ENCODE measurements at regions of chr20 and their contacts with region 1.

Region 1: DNA sequence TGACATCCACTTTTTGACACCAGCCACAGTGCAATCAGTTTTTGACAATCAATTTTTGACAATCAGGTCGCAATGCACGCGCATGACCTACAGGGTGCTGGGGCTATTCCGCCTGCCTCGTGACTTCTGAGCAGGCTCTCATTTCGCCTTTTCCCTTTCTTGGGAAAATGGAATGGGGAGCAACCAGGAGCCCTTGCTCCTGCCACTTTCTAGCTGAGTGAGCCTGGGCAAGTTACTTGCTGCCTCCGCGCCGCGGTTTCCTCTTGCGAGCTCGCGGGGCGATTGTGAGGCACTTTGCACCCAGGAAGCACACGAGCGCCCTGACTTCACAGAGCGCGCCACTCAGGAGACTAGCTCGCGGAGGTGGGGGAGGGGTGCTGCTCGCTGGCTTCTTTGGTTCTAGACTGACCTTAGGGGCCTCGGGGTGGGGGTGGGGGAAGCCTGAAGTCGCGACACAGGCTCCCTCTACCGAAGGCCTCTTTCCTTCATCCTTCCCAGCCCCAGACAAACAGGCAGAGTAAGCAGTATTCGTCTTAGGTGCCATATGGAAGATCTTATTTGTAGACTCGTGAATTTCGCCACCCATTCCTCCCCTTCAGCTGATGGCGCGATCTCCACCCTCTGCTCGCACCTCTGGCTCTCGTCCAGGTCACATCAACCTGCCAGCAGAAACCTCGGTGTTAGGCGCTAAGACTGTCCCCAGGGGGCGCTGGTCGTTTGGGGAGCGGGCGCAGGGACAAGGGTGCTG is 4.6 kb downstream of the TP53TG5 start:
- DNase-seq: peak; percentile 96
- H3K4me3 Mint-ChIP-seq: peak overlapping the region; percentile 77
- H3K27ac Mint-ChIP-seq: peak overlapping the region; percentile 84
- H3K4me1 Mint-ChIP-seq: peaks cover 25% of the 10 kb centered on the region
- H3K27me3 Mint-ChIP-seq: no peaks in the 10 kb centered on the region

Region 2: GRCh38 chr20:43721429-43722152 is 1651.9 kb before region 1 on chr20:
- intact Hi-C with region 1: no loop called
- DNase-seq: no peak
- H3K4me3 Mint-ChIP-seq: peak overlapping the region; percentile 66
- H3K27ac Mint-ChIP-seq: peak overlapping the region; percentile 79
- H3K4me1 Mint-ChIP-seq: peaks cover 16% of the 10 kb centered on the region
- H3K27me3 Mint-ChIP-seq: no peaks in the 10 kb centered on the region

Region 3: GRCh38 chr20:45283548-45284057 is 89.9 kb before region 1 on chr20:
- intact Hi-C with region 1: no loop called
- DNase-seq: no peak
- H3K4me3 Mint-ChIP-seq: no peak overlapping the region
- H3K27ac Mint-ChIP-seq: no peak overlapping the region
- H3K4me1 Mint-ChIP-seq: no peaks in the 10 kb centered on the region
- H3K27me3 Mint-ChIP-seq: peaks cover 35% of the 10 kb centered on the region

Region 4: DNA sequence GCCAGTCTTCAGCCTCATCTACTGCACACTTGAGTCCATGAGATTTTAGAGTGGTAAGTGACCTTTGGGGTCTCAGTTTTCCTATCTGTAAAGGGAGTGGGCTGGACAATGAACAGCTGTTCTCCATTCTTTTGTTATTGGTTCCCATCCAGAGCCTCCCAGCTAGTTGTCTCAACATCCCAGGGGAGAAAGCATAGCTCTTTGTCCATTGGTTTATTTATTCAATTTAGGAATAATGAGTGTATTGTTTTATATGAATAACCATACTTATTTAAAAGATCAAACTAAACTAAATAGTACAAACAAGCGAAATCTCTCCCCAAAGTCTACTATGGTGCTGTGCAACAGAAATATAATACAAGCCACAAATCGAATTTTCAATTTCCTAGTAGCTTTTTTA is 56.1 kb after region 1 on chr20:
- intact Hi-C with region 1: no loop called
- DNase-seq: no peak
- H3K4me3 Mint-ChIP-seq: no peak overlapping the region
- H3K27ac Mint-ChIP-seq: no peak overlapping the region
- H3K4me1 Mint-ChIP-seq: peaks cover 9% of the 10 kb centered on the region
- H3K27me3 Mint-ChIP-seq: no peaks in the 10 kb centered on the region

Region 5: GRCh38 chr20:45450097-45450818 is 76.7 kb after region 1 on chr20:
- intact Hi-C with region 1: loop called (anchors 1 kb)
- DNase-seq: peak; percentile 76
- H3K4me3 Mint-ChIP-seq: no peak overlapping the region
- H3K27ac Mint-ChIP-seq: no peak overlapping the region
- H3K4me1 Mint-ChIP-seq: peaks cover 11% of the 10 kb centered on the region
- H3K27me3 Mint-ChIP-seq: peaks cover 5% of the 10 kb centered on the region

Region 6: GRCh38 chr20:45933266-45934045 is 559.9 kb after region 1 on chr20:
- intact Hi-C with region 1: no loop called
- DNase-seq: peak; percentile 89
- H3K4me3 Mint-ChIP-seq: peak overlapping the region; percentile 99
- H3K27ac Mint-ChIP-seq: peak overlapping the region; percentile 99
- H3K4me1 Mint-ChIP-seq: peaks cover 20% of the 10 kb centered on the region
- H3K27me3 Mint-ChIP-seq: no peaks in the 10 kb centered on the region